ENCODE measurements at regions of chr2 and their contacts with region 1.

Region 1: GRCh38 chr2:29212009-29212408 is 96.8 kb downstream of the CLIP4 start:
- DNase-seq: peak in 1 of 2 experiments; percentile 38
- H3K4me3 ChIP-seq: no peak overlapping the region
- H3K27ac ChIP-seq: no peak overlapping the region
- H3K4me1 ChIP-seq: peaks cover 0 to 4% (median 0%) of the 10 kb centered on the region in 4 experiments; a peak in 2 of 7 replicates
- H3K27me3 ChIP-seq: no peaks in the 10 kb centered on the region
- CTCF ChIP-seq: peak; percentile 22 to 46 (median 30); a peak in 3 of 4 replicates
- EP300 ChIP-seq: no peak
- POLR2A ChIP-seq: no peak
- RAD21 ChIP-seq: peak; percentile 59 to 61

Region 2: GRCh38 chr2:29201979-29202378 is 10.0 kb before region 1 on chr2:
- CTCF ChIA-PET with region 1: interaction called, 10 read pairs
- POLR2A ChIA-PET with region 1: interaction called, 3 read pairs
- DNase-seq: no peak
- H3K4me3 ChIP-seq: peak overlapping the region in 1 of 4 experiments; percentile 24; a peak in 1 of 8 replicates
- H3K27ac ChIP-seq: no peak overlapping the region
- H3K4me1 ChIP-seq: no peaks in the 10 kb centered on the region; a peak in 1 of 7 replicates
- H3K27me3 ChIP-seq: no peaks in the 10 kb centered on the region
- CTCF ChIP-seq: no peak
- EP300 ChIP-seq: no peak
- POLR2A ChIP-seq: no peak
- RAD21 ChIP-seq: no peak

Region 3: GRCh38 chr2:29223851-29224694 is 12.1 kb after region 1 on chr2:
- CTCF ChIA-PET with region 1: interaction called, 29 read pairs
- POLR2A ChIA-PET with region 1: no interaction called
- DNase-seq: no peak
- H3K4me3 ChIP-seq: no peak overlapping the region
- H3K27ac ChIP-seq: no peak overlapping the region
- H3K4me1 ChIP-seq: no peaks in the 10 kb centered on the region
- H3K27me3 ChIP-seq: no peaks in the 10 kb centered on the region
- CTCF ChIP-seq: no peak
- EP300 ChIP-seq: no peak
- POLR2A ChIP-seq: no peak
- RAD21 ChIP-seq: no peak